ENCODE measurements at regions of chr19 and their contacts with region 1.

Region 1: GRCh38 chr19:12139885-12140547 is at the start of gene ZNF20:
- DNase-seq: peak; percentile 96
- H3K4me3 ChIP-seq: peak within 1 kb of the TSS; percentile 80
- H3K27ac ChIP-seq: peak within 1 kb of the TSS; percentile 79
- H3K4me1 ChIP-seq: peaks cover 8% of the 10 kb centered on the region
- H3K27me3 ChIP-seq: no peaks in the 10 kb centered on the region
- CTCF ChIP-seq: no peak
- total RNA-seq, gene ZNF20: 4.9 and 5.4 TPM in 2 replicates

Region 2: DNA sequence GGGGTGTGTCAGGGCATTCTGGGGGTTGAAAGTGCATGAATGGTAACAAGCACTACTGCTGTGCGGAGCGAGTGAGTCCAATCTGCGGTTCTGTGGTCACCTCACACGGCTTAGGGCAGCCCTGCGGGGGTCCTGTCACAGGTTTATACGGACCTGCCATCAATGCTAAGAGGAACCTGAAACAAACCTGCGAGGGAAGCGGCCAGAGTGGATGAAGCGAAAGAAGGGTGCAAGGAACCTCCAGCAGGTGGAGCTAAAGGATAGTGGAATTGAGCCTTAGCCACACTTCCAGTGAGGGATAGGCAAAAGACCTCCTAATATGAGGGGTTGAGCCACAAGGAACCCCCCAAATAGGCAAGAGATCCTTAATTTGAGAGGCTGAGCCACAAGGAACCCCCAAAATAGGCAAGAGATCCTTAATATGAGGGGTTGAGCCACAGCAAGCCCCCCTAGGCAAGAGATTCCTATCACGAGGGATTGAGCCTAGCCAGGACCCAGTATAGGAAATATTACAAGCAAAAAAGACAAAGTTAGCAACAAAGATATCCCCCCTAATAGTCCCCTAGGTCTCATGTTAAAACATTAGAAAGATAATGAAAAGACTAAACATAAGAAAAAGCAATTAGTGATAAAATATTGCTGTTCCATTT is 258.7 kb before region 1 on chr19:
- CTCF ChIA-PET with region 1: interaction called, 3 read pairs
- POLR2A ChIA-PET with region 1: no interaction called
- intact Hi-C with region 1: loop called (anchors 1 kb)
- DNase-seq: peak; percentile 76
- H3K4me3 ChIP-seq: no peak overlapping the region
- H3K27ac ChIP-seq: no peak overlapping the region
- H3K4me1 ChIP-seq: no peaks in the 10 kb centered on the region
- H3K27me3 ChIP-seq: peaks cover 4% of the 10 kb centered on the region
- CTCF ChIP-seq: peak; percentile 79

Region 3: GRCh38 chr19:11924886-11925650 is 214.9 kb before region 1 on chr19 and contains the start of gene ZNF700:
- CTCF ChIA-PET with region 1: interaction called, 6 read pairs
- POLR2A ChIA-PET with region 1: interaction called, 6 read pairs
- intact Hi-C with region 1: loop called (anchors 2 kb)
- DNase-seq: peak; percentile 96
- H3K4me3 ChIP-seq: peak within 1 kb of the TSS; percentile 82
- H3K27ac ChIP-seq: peak within 1 kb of the TSS; percentile 90
- H3K4me1 ChIP-seq: no peaks in the 10 kb centered on the region
- H3K27me3 ChIP-seq: no peaks in the 10 kb centered on the region
- CTCF ChIP-seq: no peak
- total RNA-seq, gene ZNF700: 10.9 and 11.0 TPM in 2 replicates

Region 4: DNA sequence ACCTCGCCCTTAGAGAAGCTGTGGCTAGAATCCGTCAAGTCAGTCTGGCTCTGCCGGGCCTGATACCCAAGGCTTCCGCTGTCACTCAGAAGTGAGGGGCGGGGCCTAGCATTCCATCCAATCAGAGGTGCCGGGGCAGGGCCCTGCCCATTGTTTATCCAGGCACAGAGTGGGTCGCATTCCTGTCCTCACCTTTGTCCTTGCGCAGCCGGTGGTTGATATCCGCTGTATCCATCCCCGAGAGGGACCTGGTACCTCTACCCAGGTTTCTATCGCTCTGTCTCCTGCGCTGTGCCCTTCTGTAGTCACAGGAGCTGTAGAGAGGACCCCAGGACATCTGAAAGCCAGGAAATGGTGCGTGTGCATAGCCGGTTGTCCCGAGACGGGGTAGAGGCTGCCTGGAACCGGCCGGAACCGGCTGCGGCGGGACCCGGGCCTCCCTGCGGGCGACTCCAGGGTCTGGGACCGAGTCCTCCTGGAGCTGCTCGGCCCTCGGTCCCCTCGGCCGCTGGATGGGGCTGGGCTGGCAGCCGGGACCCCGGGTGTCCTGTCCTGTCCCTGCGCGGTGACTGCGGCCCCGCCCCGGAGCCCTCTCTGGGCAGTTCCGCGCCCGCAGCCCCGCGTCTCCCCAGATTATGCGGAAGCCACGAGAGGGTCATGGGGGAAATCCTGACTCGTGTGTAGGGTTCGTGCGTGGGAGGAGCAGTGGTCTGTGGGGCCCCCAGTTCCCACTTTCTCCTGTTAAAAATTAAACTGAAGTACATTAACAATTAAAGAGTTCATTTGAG is 175.0 kb before region 1 on chr19 and contains the start of gene ZNF763:
- CTCF ChIA-PET with region 1: interaction called, 7 read pairs
- POLR2A ChIA-PET with region 1: no interaction called
- intact Hi-C with region 1: loop called (anchors 2 kb)
- DNase-seq: peak; percentile 86
- H3K4me3 ChIP-seq: peak within 1 kb of the TSS; percentile 48
- H3K27ac ChIP-seq: no peak within 1 kb of the TSS
- H3K4me1 ChIP-seq: peaks cover 7% of the 10 kb centered on the region
- H3K27me3 ChIP-seq: no peaks in the 10 kb centered on the region
- CTCF ChIP-seq: no peak
- total RNA-seq, gene ZNF763: 0.24 TPM in 1 of 2 replicates, not detected in the other

Region 5: GRCh38 chr19:12064590-12065538 is 75.2 kb before region 1 on chr19 and contains the start of gene ZNF844:
- CTCF ChIA-PET with region 1: interaction called, 10 read pairs
- POLR2A ChIA-PET with region 1: no interaction called
- intact Hi-C with region 1: no loop called
- DNase-seq: peak; percentile 67
- H3K4me3 ChIP-seq: peak within 1 kb of the TSS; percentile 67
- H3K27ac ChIP-seq: no peak within 1 kb of the TSS
- H3K4me1 ChIP-seq: no peaks in the 10 kb centered on the region
- H3K27me3 ChIP-seq: no peaks in the 10 kb centered on the region
- CTCF ChIP-seq: no peak
- total RNA-seq, gene ZNF844: 1.5 TPM in 2 replicates

Region 6: DNA sequence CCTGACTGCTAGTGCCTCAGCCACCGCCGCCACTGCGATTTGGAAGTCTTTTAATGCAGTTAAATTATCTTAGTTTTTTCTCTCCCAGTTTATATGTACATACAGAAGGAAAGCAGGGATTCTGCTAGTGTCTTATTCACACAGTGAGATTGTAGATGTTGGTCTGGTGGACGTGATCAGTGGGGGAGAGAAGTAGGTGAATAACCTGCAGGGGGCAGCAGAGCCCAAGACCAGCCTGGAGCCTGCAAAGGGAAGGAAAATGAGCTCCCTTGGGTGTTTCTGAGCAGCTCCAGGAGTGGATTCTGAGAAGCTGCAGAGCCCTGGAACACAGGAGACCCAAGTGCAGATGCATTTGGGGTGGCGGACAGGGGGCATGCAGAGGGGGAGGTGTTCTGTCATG is 49.2 kb before region 1 on chr19:
- CTCF ChIA-PET with region 1: interaction called, 13 read pairs
- POLR2A ChIA-PET with region 1: no interaction called
- intact Hi-C with region 1: loop called (anchors 1 kb)
- DNase-seq: peak; percentile 83
- H3K4me3 ChIP-seq: no peak overlapping the region
- H3K27ac ChIP-seq: no peak overlapping the region
- H3K4me1 ChIP-seq: peaks cover 9% of the 10 kb centered on the region
- H3K27me3 ChIP-seq: no peaks in the 10 kb centered on the region
- CTCF ChIP-seq: peak; percentile 80

Measured in A673 (cell line).